PC-9 (cell line): ENCODE measurements at regions of chr12 and their contacts with region 1.

Region 1: DNA sequence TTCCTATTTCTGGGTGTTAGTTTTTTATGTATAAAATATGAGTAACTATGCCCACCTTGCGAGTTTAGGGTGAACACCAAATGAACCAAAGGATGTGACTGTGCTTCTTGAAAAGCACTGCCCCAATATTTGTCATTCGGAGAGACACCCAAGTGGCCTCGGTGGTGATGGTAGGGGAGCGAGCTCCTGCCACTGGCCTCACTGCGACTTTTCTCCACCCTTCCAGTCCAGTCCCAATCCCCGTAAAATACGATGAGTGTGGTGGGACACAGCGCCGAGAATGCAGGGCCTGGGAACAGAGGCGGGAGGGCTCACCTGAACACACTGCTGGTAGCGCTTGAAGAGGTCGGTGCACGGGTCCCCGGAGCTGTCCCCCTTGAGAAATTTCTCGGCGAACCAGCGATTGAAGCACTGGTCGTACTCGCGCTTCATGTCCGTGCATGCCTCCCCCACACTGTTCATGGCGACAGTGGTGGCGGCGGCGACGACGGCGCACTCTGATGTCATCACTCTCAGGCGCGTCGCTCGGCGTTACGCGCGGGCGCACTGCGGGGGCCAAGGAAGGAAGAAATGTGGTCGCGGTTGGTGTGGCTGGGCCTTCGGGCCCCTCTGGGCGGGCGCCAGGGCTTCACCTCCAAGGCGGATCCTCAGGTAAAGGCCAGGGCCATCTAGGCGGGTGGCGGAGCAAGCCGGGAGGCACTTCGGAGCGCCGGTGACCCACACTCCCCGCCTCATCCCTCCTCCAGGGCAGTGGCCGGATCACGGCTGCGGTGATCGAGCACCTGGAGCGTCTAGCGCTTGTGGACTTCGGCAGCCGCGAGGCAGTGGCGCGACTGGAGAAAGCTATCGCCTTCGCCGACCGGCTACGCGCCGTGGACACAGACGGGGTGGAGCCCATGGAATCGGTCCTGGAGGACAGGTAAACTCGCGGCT is at the starts of genes GATC and TRIAP1:
- DNase-seq: peak; percentile 65 to 78
- H3K4me3 ChIP-seq: peak within 1 kb of the TSS; percentile 73
- H3K27ac ChIP-seq: peak within 1 kb of the TSS; percentile 45
- H3K4me1 ChIP-seq: peaks cover 17% of the 10 kb centered on the region
- H3K27me3 ChIP-seq: no peaks in the 10 kb centered on the region
- CTCF ChIP-seq: no peak
- total RNA-seq, gene GATC: 24.3 and 40.2 TPM in 2 replicates
- total RNA-seq, gene TRIAP1: 23.5 and 27.5 TPM in 2 replicates

Region 2: DNA sequence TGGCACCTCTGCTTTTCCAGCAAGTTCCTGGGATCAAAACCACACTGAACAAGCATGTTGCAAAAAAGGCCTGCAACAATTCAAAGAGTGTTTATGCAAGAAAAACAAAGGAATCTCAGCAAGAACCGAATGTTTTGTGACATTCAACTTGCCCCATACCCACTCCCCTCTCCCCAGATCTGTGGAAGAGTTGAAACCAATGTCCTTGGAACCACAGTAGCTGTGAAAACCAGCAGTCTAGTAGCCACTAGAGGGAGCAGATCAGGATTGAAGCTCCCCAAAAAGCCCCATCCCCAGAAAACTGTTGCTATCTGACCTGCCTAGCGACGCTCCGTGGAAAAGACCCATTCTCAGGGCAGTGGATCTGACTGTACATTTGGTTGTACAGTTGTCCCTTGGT is 751.1 kb before region 1 on chr12:
- CTCF ChIA-PET with region 1: no interaction called
- POLR2A ChIA-PET with region 1: no interaction called
- intact Hi-C with region 1: no loop called
- DNase-seq: no peak
- H3K4me3 ChIP-seq: no peak overlapping the region
- H3K27ac ChIP-seq: no peak overlapping the region
- H3K4me1 ChIP-seq: no peaks in the 10 kb centered on the region
- H3K27me3 ChIP-seq: no peaks in the 10 kb centered on the region
- CTCF ChIP-seq: peak; percentile 41

Region 3: DNA sequence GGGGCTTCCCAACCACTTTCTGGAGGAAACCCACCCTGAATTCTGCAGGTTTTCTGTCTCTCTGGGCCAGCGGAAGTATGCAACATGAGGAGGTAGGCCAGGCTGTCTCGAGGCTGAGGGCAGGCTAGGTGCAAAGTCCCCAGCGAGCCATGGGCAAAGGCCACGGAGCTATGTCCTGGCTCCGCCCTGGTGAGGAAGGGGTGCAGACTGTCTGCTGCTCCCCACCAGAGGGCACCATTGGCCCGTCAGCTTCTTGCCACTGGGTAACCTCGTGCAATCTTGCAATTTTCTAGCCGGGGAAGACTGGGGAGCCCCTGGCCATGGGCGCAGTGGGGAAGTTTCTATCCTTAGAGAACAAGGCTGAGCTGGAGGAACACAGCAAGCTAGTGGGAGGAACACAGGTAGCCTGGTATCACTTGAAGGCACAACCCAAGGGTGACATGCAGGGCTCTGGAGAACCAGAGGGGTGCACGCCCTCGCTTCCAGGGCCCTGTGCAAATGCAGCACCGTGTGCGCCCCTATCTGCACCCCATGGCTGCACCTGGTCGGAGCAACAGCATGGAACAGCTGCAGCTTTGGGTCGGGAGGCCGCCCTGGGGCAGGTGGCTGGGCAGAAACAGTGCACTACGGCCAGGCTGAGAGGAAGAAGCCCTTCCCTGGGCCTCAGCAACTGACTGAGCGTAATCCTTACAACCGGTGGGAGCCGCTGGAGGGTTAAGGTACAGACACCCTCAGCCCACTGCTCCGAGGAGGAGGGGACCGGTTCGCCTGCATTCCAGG is 217.7 kb before region 1 on chr12:
- CTCF ChIA-PET with region 1: no interaction called
- POLR2A ChIA-PET with region 1: no interaction called
- intact Hi-C with region 1: loop called (anchors 2 kb)
- DNase-seq: peak; percentile 80 to 92
- H3K4me3 ChIP-seq: peak overlapping the region; percentile 54; the same call in 1 of the 2 replicates
- H3K27ac ChIP-seq: peak overlapping the region; percentile 99
- H3K4me1 ChIP-seq: peaks cover 53% of the 10 kb centered on the region
- H3K27me3 ChIP-seq: no peaks in the 10 kb centered on the region
- CTCF ChIP-seq: peak; percentile 81

Region 4: GRCh38 chr12:120489018-120489417 is 42.8 kb after region 1 on chr12:
- CTCF ChIA-PET with region 1: interaction called, 10 read pairs
- POLR2A ChIA-PET with region 1: no interaction called
- intact Hi-C with region 1: no loop called
- DNase-seq: no peak
- H3K4me3 ChIP-seq: no peak overlapping the region
- H3K27ac ChIP-seq: no peak overlapping the region
- H3K4me1 ChIP-seq: no peaks in the 10 kb centered on the region
- H3K27me3 ChIP-seq: no peaks in the 10 kb centered on the region
- CTCF ChIP-seq: no peak